Activated CD4-positive, alpha-beta T cell treated with anti-CD3 and anti-CD28 coated beads, Interleukin-2, amount 10 ng/mL, durations not matched to agents 24 days and 14 days (primary cell): ENCODE measurements at regions of chr19 and their contacts with region 1.

Region 1: DNA sequence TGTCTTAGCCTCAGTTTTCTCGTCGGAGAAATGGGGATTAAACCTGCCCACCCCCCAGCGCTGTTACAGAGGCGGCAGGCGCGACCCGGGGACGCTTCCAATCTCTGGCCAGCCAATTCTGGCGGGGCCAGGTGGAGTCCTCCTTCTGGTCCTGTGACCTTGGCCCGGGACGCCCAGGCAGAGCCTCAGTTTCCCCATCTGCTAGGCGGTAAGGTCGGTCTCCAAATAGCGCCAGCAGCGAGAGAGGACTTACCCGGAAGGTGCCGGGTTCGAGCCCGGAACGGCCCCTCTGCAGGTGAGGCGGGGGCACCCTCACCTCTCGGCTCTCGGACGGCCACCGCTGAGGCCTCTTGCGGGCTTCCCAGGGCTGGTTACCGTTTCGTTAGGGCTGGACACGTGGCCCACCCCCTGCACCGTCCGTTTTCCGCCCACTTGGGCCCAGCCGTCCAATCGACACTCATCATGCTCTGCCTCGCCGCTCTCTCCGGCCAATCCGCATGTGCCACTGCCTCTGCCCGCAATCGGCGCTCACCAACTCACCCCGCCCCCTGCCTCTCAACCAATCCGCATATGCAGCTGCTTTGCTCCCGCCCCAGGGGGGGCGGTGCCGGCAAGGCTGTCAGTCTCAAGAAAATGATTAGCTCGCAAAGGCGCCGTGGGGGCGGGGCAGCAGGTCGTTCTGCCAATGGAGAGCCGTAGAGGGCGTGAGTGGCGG is at the start of gene ISOC2:
- DNase-seq: peak; percentile 100
- H3K4me3 Mint-ChIP-seq: peak within 1 kb of the TSS; percentile 94
- H3K27ac Mint-ChIP-seq: peak within 1 kb of the TSS; percentile 78
- H3K4me1 Mint-ChIP-seq: peaks cover 16% of the 10 kb centered on the region
- H3K27me3 Mint-ChIP-seq: no peaks in the 10 kb centered on the region
- total RNA-seq, gene ISOC2: 34.2 and 35.2 TPM in 2 replicates

Region 2: DNA sequence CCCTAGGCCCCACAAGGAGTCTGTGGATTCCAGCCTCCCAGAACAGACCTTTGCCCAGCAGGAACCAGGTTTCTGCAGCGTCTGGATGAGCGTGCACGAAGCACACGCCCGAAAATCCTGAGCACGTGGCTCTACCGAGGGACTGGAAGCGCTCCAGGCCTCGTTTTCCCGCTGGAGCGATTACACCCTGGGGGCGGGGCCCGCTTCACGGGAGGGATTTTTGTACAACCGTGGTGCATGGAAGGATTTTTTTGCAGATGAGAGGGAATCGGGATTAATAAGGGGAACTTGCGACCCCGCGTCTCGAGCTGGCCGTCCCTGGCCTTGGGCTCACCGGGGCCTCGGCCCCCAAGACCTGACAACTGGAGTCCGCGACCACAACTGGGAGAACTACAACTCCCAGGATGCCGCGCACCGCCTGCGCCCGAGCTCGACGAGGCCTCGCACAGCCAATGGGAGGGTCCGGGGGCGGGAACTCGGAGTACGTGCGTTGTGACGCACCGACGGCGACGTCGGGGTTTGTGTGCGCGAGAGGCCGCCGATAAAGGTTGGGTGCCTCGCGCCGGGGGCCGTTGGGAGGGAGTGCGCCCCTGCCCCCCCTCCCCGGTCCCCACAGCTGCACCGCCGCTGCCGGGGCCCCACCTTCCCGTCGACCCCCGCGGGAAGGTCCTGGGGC is 14.8 kb after region 1 on chr19 and contains the start of gene ZNF628:
- intact Hi-C with region 1: loop called (anchors 1 kb)
- DNase-seq: peak; percentile 99
- H3K4me3 Mint-ChIP-seq: peak within 1 kb of the TSS; percentile 93
- H3K27ac Mint-ChIP-seq: peak within 1 kb of the TSS; percentile 96
- H3K4me1 Mint-ChIP-seq: peaks cover 23% of the 10 kb centered on the region
- H3K27me3 Mint-ChIP-seq: no peaks in the 10 kb centered on the region
- total RNA-seq, gene ZNF628: 8.8 and 10.0 TPM in 2 replicates